AG04450 (cell line): ENCODE measurements at regions of chr18 and their contacts with region 1.

Region 1: GRCh38 chr18:46173393-46174341 is 69.5 kb downstream of the HAUS1 start:
- DNase-seq: peak; percentile 81
- H3K4me3 ChIP-seq: peak overlapping the region; percentile 72
- H3K27ac ChIP-seq: peak overlapping the region; percentile 85
- H3K27me3 ChIP-seq: no peaks in the 10 kb centered on the region
- CTCF ChIP-seq: peak; percentile 95

Region 2: GRCh38 chr18:45837283-45838070 is 336.2 kb before region 1 on chr18:
- CTCF ChIA-PET with region 1: no interaction called
- POLR2A ChIA-PET with region 1: no interaction called
- DNase-seq: no peak
- H3K4me3 ChIP-seq: no peak overlapping the region
- H3K27ac ChIP-seq: no peak overlapping the region
- H3K27me3 ChIP-seq: no peaks in the 10 kb centered on the region
- CTCF ChIP-seq: 0 out of 2 replicates have a peak, but pooled peaks have one; percentile 17

Region 3: DNA sequence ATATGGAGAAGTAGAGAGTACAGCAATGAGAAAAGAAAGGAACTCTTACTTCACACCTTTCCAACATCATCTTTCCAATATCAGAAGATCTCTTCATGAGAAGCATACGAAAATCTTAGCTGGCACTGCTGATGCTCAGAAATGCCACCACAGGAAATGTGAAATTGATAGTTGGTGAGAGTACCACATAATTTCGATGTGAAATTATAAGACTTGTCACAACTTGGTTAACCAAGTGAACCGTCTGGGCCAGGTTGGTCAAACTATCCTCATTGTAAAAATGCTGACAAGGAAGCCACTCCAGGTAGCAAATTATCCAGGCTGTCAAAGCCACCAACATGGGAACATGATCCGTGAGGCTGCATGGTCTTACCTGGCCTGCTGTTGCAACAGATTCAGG is 273.0 kb before region 1 on chr18:
- CTCF ChIA-PET with region 1: no interaction called
- POLR2A ChIA-PET with region 1: no interaction called
- DNase-seq: no peak
- H3K4me3 ChIP-seq: no peak overlapping the region
- H3K27ac ChIP-seq: no peak overlapping the region
- H3K27me3 ChIP-seq: no peaks in the 10 kb centered on the region
- CTCF ChIP-seq: no peak

Region 4: GRCh38 chr18:46148810-46149209 is 24.9 kb before region 1 on chr18:
- CTCF ChIA-PET with region 1: interaction called, 145 read pairs
- POLR2A ChIA-PET with region 1: interaction called, 5 read pairs
- DNase-seq: no peak
- H3K4me3 ChIP-seq: no peak overlapping the region
- H3K27ac ChIP-seq: no peak overlapping the region
- H3K27me3 ChIP-seq: no peaks in the 10 kb centered on the region
- CTCF ChIP-seq: peak; percentile 70

Region 5: DNA sequence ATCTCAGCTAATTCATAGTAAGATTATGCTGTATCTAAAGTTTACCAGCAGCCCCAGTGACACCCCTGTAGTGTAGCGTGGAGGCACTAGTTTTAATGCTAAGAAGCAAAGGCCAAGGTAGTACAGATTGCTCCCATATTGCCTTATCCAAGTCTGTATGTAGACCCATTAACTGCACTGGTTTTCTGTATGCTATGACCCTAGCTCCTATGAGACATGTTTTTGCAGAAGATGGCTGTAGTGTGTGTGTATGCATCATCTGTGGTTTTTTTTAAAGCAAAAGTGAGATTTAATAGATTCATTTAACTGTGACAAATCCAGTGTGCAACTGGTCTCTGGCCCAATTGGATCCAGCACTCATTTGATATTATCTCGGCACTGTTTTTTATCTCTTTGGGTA is 17.0 kb after region 1 on chr18:
- CTCF ChIA-PET with region 1: interaction called, 75 read pairs
- POLR2A ChIA-PET with region 1: no interaction called
- DNase-seq: no peak
- H3K4me3 ChIP-seq: no peak overlapping the region
- H3K27ac ChIP-seq: no peak overlapping the region
- H3K27me3 ChIP-seq: no peaks in the 10 kb centered on the region
- CTCF ChIP-seq: no peak

Region 6: DNA sequence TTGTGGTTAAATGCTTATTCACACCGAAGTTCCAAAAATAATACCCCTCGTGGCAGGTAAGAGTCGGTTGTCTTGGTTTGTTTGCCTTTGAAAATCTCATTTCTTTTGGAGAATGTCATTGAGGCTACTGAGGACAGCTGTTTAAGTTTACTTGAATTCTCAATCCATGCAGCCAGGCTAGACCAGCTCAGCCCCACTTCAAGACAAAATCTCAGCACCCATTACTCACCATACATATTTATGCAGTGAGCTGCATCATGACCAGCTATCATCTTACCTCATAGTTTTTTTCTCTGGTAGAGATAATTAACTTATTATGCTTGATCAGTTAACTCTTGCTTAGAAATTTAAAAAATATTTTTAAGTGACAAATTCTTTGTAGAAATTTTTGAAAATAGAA is 46.4 kb after region 1 on chr18:
- CTCF ChIA-PET with region 1: interaction called, 46 read pairs
- POLR2A ChIA-PET with region 1: no interaction called
- DNase-seq: peak; percentile 72
- H3K4me3 ChIP-seq: no peak overlapping the region
- H3K27ac ChIP-seq: peak overlapping the region; percentile 22
- H3K27me3 ChIP-seq: no peaks in the 10 kb centered on the region
- CTCF ChIP-seq: no peak

Region 7: DNA sequence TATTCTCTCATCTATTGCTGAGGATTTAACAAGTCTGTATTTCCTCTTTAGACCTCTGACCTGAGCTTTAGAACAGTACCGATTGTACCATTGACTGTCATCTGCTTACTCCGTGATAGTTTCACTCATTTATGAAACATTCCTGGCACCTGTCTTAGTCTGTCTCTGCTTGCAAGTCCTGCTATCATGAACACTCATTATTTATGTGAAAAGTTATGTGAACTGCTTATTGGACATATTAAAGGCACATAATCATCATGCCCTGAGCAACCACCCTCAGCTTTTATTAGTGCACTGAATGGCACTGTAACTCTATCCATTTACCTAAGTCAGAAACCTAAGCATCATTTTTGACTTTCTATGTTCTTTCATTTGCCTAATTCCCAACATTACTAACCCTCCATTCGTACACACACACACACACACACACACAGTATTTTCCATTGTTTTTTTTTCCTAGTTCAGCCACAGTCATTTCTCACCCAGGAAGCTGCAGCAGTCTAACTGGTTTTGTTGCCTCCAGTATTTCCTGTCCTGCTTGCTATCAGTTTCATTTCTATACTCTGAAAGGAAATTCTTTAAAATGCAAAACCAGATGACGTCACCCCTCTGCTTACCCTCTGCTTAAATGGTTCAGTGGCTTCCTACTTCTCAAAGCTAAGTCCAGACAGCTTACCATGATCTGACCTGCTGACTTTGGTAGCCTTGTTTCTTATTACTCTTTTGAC is 76.6 kb after region 1 on chr18:
- CTCF ChIA-PET with region 1: interaction called, 15 read pairs
- POLR2A ChIA-PET with region 1: interaction called, 5 read pairs
- DNase-seq: peak; percentile 65
- H3K4me3 ChIP-seq: peak overlapping the region; percentile 7; the same call in 1 of the 2 replicates
- H3K27ac ChIP-seq: peak overlapping the region; percentile 49
- H3K27me3 ChIP-seq: no peaks in the 10 kb centered on the region
- CTCF ChIP-seq: no peak

Region 8: DNA sequence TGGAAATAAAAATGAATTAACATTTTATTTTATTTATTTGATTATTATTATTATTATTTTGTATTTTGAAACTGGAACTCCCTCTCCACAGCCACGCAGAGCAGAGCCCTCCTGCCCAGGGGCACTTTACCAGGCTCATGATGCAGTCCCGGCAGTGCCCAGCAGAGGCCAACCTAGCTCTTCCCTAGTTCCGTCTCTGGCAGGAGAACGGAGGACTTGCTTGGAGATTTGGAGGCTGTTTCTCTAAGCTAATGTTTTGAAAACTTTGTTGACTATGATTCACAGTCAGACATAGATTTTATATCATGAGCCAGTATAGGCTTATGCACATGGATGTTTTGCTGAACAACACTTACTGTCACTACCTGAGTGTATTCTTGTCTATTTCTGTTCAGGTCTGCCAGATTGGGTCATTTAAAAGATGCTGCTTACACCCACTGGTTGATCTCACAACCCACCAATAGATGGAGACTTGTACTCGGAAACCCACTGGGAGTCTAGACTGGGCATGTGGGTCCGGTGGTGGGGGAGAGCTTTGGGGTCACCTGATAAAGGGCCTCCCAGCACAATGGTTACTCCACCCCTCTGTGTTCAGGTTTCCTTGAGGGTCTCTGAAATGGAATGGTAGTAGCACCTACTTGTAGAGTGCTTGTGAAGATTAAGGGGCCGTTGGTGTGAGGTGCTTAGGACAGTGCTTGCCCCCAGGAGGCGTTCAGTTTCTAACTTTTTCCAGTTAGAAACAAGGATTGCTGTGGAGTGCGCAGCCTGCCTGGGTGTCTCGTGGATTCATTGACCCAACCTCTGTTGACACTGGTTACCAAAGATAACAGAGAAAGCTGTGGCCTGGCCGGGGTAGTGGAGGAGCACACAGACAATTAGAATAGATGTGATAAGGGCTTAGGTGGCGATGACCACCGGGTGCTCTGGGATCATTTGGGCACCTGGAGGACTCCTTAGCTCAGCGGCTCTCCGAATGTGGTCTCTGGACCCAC is 107.8 kb after region 1 on chr18:
- CTCF ChIA-PET with region 1: interaction called, 97 read pairs
- POLR2A ChIA-PET with region 1: no interaction called
- DNase-seq: peak; percentile 49
- H3K4me3 ChIP-seq: no peak overlapping the region
- H3K27ac ChIP-seq: no peak overlapping the region
- H3K27me3 ChIP-seq: no peaks in the 10 kb centered on the region
- CTCF ChIP-seq: peak; percentile 97

Region 9: GRCh38 chr18:46622999-46623398 is 449.3 kb after region 1 on chr18:
- CTCF ChIA-PET with region 1: interaction called, 21 read pairs
- POLR2A ChIA-PET with region 1: no interaction called
- DNase-seq: no peak
- H3K4me3 ChIP-seq: no peak overlapping the region
- H3K27ac ChIP-seq: no peak overlapping the region
- H3K27me3 ChIP-seq: no peaks in the 10 kb centered on the region
- CTCF ChIP-seq: no peak